Posterior vena cava (tissue), 2 donors: ENCODE measurements at regions of chr4 and their contacts with region 1.

Region 1: DNA sequence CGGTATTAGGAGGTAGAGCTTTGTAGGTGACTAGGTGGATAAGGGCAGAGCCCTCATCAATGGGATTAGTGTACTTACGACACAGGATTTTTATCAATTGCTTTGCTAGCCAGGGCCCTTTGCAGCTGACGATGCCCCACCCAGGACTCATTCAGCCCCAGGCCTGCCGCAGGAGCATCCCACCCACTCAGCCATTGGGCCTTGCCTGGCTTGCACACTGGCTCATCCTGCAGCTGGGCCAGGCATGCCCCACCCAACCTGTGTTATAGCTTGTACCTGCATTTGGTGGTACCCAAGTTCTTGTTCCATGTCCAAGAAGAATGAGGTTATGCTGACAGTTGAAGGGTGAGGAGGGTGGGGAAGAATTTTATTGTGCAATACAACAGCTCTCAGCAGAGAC is 317.5 kb downstream of the PPARGC1A start:
- DNase-seq: no peak

Region 2: DNA sequence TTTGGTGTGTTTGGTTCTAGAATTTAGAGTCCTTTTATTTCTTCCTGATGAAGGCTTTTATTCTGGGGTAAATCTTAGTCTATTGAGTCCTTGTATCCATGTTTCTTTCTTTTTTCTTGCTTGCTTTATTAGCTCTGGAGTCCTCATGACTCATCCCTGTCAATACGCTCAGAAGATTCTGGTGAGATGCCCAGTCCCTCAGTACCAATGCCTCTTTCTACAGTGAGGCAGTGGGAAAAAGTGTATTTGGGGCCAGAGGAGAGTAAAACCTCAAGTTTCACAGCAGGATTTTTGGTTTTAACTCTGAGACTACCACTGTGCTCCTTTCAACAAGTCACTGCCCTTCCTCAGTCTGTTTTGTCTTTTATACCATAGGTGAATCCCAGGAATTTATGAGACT is 511.6 kb before region 1 on chr4:
- intact Hi-C with region 1: no loop called
- DNase-seq: no peak

Region 3: GRCh38 chr4:23392860-23393458 is 179.4 kb before region 1 on chr4:
- intact Hi-C with region 1: loop called in 1 of 2 experiments (anchors 10 kb)
- DNase-seq: no peak

Region 4: GRCh38 chr4:24924309-24924781 is 1352.0 kb after region 1 on chr4:
- intact Hi-C with region 1: no loop called
- DNase-seq: peak; percentile 84